ENCODE measurements at regions of chr7 and their contacts with region 1.

Region 1: DNA sequence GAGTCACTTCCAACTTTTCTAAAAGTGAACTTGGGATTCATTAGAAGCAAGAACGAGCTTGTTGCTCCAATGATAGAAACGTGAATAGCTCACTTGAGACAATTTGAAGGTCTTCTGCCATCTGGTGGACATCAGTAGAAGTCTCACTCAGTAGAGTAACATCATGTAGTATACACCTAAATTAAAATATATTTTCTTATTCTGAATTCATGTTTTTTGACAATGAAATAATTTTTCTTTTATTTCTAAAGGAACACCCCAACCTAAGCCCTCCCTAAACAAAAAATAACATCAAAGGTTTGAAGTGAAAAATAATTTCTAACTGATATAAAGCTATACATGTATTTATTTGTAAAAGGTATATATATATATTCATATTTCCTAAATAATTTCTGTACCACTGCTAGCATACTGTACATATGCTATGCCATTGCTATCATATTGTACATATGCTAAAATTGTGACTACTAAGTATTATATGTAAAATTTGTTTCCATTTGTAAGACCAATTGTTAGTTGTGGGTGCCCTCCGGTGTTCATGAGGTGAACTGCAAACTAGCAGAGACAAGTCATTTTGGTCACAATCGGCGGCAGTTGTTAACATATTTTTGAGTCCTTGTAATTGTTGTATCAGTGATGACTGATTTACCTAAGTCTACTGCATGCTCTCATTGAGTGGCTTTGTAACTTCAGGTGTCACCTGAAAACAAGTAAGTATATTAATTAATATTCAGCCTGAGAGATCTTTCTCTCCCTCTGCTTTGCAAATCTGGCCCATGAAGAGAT is 121.9 kb downstream of the PTPRZ1 start:
- DNase-seq: peak in 2 of 9 donors; percentile 5 to 36
- ATAC-seq: peak; percentile 68
- H3K4me3 ChIP-seq: no peak overlapping the region
- H3K4me3 Mint-ChIP-seq: no peak overlapping the region
- H3K27ac ChIP-seq: no peak overlapping the region
- H3K27ac Mint-ChIP-seq: no peak overlapping the region
- H3K4me1 ChIP-seq: no peaks in the 10 kb centered on the region
- H3K4me1 Mint-ChIP-seq: peaks cover 0 to 2% (median 0%) of the 10 kb centered on the region in 7 donors
- H3K27me3 ChIP-seq: no peaks in the 10 kb centered on the region
- H3K27me3 Mint-ChIP-seq: peaks cover 0 to 4% (median 0%) of the 10 kb centered on the region in 5 donors

Region 2: DNA sequence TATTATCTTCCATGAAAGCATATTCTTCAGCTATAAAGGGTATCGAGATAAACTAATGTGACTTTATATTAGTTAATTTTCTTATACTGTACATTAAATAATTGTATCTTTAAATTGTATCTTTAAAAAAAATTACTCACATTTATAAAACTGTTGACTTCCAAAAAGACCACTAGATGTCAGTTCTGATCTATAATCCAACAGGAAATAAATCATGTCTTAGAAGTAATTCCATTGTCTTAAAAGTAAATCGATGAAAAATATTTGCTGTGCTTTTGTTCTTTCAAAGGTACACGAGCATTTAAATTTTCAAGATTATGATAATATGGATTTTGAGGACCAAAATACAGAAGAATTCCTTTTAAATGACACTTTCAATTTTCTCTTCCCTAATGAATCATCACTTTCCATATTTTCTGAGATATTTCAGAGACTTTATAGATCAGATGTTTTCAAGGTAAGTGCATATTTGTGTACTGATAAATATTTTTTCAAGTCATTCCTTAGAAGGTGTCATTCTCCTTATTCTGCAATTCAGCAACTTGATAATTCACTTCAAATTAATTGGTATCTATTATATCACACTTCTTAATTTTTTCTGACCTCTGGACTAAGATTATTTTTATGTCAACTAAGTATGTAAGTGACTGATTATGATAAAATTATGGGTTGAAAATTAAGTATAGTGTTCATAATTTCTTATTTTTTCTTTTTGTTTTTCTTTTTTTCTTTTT is 867.9 kb before region 1 on chr7:
- CTCF ChIA-PET with region 1: no interaction called
- POLR2A ChIA-PET with region 1: no interaction called
- intact Hi-C with region 1: loop called in 1 of 2 experiments (anchors 2 kb)
- DNase-seq: no peak
- ATAC-seq: no peak
- H3K4me3 ChIP-seq: no peak overlapping the region
- H3K4me3 Mint-ChIP-seq: no peak overlapping the region
- H3K27ac ChIP-seq: no peak overlapping the region
- H3K27ac Mint-ChIP-seq: no peak overlapping the region
- H3K4me1 ChIP-seq: no peaks in the 10 kb centered on the region
- H3K4me1 Mint-ChIP-seq: no peaks in the 10 kb centered on the region
- H3K27me3 ChIP-seq: no peaks in the 10 kb centered on the region
- H3K27me3 Mint-ChIP-seq: peaks cover 0 to 18% (median 7%) of the 10 kb centered on the region in 5 donors

Region 3: GRCh38 chr7:121752706-121753105 is 242.1 kb before region 1 on chr7:
- CTCF ChIA-PET with region 1: no interaction called
- POLR2A ChIA-PET with region 1: no interaction called
- intact Hi-C with region 1: loop called in 1 of 2 experiments (anchors 5 kb)
- DNase-seq: no peak
- ATAC-seq: no peak
- H3K4me3 ChIP-seq: no peak overlapping the region
- H3K4me3 Mint-ChIP-seq: no peak overlapping the region
- H3K27ac ChIP-seq: no peak overlapping the region
- H3K27ac Mint-ChIP-seq: no peak overlapping the region
- H3K4me1 ChIP-seq: no peaks in the 10 kb centered on the region
- H3K4me1 Mint-ChIP-seq: no peaks in the 10 kb centered on the region
- H3K27me3 ChIP-seq: no peaks in the 10 kb centered on the region
- H3K27me3 Mint-ChIP-seq: peaks cover 0 to 14% (median 0%) of the 10 kb centered on the region in 5 donors

Region 4: DNA sequence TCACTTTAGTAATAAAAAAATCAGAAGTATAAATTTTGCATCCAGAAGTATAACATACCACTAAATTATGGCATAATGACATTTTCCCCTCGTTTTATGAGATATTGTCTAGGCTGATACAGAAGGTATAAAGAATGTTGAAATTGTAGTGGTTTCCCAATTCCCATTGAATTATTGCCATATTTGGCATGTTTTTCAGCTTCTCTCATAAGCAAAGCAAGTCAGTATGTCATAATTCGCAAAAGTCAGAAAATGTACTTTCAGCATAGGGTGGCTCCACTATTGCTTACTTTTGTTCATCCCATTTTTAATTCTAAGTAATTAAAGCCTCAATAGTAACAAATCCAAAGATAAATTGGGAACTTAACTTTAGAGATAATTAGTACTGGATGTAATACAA is 141.5 kb before region 1 on chr7:
- CTCF ChIA-PET with region 1: no interaction called
- POLR2A ChIA-PET with region 1: no interaction called
- intact Hi-C with region 1: no loop called
- DNase-seq: no peak
- ATAC-seq: no peak
- H3K4me3 ChIP-seq: no peak overlapping the region
- H3K4me3 Mint-ChIP-seq: no peak overlapping the region
- H3K27ac ChIP-seq: no peak overlapping the region
- H3K27ac Mint-ChIP-seq: no peak overlapping the region
- H3K4me1 ChIP-seq: no peaks in the 10 kb centered on the region
- H3K4me1 Mint-ChIP-seq: no peaks in the 10 kb centered on the region
- H3K27me3 ChIP-seq: no peaks in the 10 kb centered on the region
- H3K27me3 Mint-ChIP-seq: no peaks in the 10 kb centered on the region

Measured in naive thymus-derived CD4-positive, alpha-beta T cell (primary cell).